ENCODE measurements at regions of chr17 and their contacts with region 1.

Region 1: DNA sequence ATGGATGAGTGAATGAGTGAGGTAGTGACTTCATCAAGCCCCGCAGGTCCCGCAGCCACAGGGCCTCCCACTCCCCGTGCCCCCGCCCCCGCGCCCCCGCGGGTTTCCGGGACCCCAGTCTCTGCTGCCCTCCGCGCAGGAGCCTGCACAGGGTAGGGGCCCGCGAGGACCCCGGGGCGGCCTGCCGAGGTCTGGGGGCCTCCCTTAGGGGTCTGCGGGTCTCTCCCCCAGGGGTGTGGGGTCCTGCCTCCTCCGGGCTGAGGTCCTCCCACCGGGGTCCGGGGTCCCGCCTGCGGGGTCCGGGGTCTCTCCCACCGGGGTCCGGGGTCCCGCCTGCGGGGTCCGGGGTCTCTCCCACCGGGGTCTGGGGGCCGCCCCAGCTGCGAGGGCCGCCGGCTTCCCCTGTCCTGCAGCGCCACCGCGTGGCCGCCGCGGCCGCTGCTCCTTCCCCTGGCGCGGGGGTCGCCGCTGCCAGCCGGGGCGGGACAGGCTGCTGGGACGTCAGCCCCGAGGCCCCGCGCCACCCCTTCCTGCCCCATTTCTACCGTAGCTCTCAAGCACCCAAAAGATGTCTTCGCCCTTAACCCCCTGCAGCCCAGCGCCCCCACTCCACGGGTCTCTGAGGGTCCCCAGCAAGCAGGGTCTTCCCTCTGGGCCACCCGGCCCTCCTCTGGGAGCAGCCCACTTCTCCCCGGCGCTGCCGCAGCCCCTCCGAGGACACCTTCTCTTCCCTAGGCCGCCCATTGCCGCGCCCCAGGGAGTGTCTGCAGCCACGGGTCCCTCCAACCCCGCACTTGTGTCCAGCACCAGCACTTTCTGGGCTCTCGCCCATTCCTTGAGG is 10.4 kb upstream of the CHMP6 start:
- DNase-seq: no peak
- H3K4me3 ChIP-seq: peak overlapping the region in 1 of 2 donors; percentile 21
- H3K27ac ChIP-seq: no peak overlapping the region
- H3K4me1 ChIP-seq: peaks cover 6% of the 10 kb centered on the region
- H3K27me3 ChIP-seq: no peaks in the 10 kb centered on the region
- CTCF ChIP-seq: peak; percentile 73 to 99 (median 76)
- POLR2A ChIP-seq: no peak

Region 2: DNA sequence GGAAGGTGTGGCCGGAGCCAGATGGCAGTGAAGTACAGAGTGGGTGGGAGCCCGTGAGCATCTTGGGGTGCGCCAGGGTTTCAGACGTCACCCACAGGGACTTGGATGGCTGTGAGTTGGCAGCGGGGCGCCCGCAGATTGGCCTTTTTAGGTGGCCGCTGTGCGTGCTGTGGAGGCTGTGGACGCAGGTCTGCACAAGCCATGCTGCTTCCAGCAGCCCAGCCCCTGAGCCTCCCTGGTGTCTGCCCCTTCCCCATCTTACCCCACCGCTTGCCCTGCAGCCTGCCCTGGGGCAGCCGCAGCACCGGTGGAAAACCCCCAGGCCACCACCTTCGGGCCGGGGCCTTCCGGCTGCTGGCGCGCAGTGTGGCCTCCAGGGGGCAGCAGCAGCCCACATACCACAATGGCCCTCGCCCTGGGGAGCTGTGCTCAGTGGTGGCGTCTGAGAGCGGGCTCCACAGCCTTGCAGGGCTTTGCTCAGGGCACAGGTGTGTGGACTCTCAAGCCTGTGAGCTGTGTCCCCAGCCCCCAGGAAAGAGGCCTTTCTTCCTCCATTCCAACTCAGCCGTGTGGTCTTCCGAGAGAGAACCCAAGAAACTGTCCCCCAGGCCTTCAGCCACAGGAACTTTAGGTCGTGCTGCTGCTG is 554.5 kb before region 1 on chr17:
- intact Hi-C with region 1: loop called (anchors 5 kb)
- DNase-seq: no peak
- H3K4me3 ChIP-seq: no peak overlapping the region
- H3K27ac ChIP-seq: no peak overlapping the region
- H3K4me1 ChIP-seq: peaks cover 7% of the 10 kb centered on the region
- H3K27me3 ChIP-seq: no peaks in the 10 kb centered on the region
- CTCF ChIP-seq: peak; percentile 92 to 95 (median 94)
- POLR2A ChIP-seq: no peak

Region 3: GRCh38 chr17:80899402-80900268 is 81.6 kb before region 1 on chr17:
- intact Hi-C with region 1: loop called (anchors 10 kb)
- DNase-seq: no peak
- H3K4me3 ChIP-seq: no peak overlapping the region
- H3K27ac ChIP-seq: no peak overlapping the region
- H3K4me1 ChIP-seq: peaks cover 17% of the 10 kb centered on the region
- H3K27me3 ChIP-seq: no peaks in the 10 kb centered on the region
- CTCF ChIP-seq: peak in 1 of 3 experiments; percentile 42
- POLR2A ChIP-seq: no peak